Activated CD4-positive, alpha-beta memory T cell treated with anti-CD3 and anti-CD28 coated beads for 36 hours (primary cell): ENCODE measurements at regions of chr4 and their contacts with region 1.

Region 1: GRCh38 chr4:88792268-88792781 is 94.7 kb upstream of the NAP1L5 start:
- DNase-seq: no peak
- H3K4me3 Mint-ChIP-seq: no peak overlapping the region
- H3K27ac Mint-ChIP-seq: no peak overlapping the region
- H3K4me1 Mint-ChIP-seq: peaks cover 19% of the 10 kb centered on the region
- H3K27me3 Mint-ChIP-seq: peaks cover under 1% of the 10 kb centered on the region

Region 2: GRCh38 chr4:88672987-88673386 is 119.3 kb before region 1 on chr4:
- CTCF ChIA-PET with region 1: interaction called, 3 read pairs
- POLR2A ChIA-PET with region 1: no interaction called
- intact Hi-C with region 1: loop called (anchors 2 kb)
- DNase-seq: peak; percentile 39
- H3K4me3 Mint-ChIP-seq: no peak overlapping the region
- H3K27ac Mint-ChIP-seq: no peak overlapping the region
- H3K4me1 Mint-ChIP-seq: peaks cover 6% of the 10 kb centered on the region
- H3K27me3 Mint-ChIP-seq: no peaks in the 10 kb centered on the region

Region 3: GRCh38 chr4:88706574-88706973 is 85.8 kb before region 1 on chr4:
- CTCF ChIA-PET with region 1: no interaction called
- POLR2A ChIA-PET with region 1: no interaction called
- intact Hi-C with region 1: loop called (anchors 2 kb)
- DNase-seq: no peak
- H3K4me3 Mint-ChIP-seq: no peak overlapping the region
- H3K27ac Mint-ChIP-seq: no peak overlapping the region
- H3K4me1 Mint-ChIP-seq: peaks cover 14% of the 10 kb centered on the region
- H3K27me3 Mint-ChIP-seq: no peaks in the 10 kb centered on the region

Region 4: GRCh38 chr4:88803600-88804096 is 11.3 kb after region 1 on chr4:
- CTCF ChIA-PET with region 1: no interaction called
- POLR2A ChIA-PET with region 1: interaction called, 3 read pairs
- intact Hi-C with region 1: loop called (anchors 1 kb)
- DNase-seq: peak; percentile 26
- H3K4me3 Mint-ChIP-seq: no peak overlapping the region
- H3K27ac Mint-ChIP-seq: no peak overlapping the region
- H3K4me1 Mint-ChIP-seq: peaks cover 18% of the 10 kb centered on the region
- H3K27me3 Mint-ChIP-seq: peaks cover 7% of the 10 kb centered on the region